CD8-positive, alpha-beta T cell (primary cell): ENCODE measurements at regions of chr1 and their contacts with region 1.

Region 1: GRCh38 chr1:167599957-167600581 is 30.0 kb upstream of the RCSD1 start:
- DNase-seq: peak in 6 of 9 experiments; percentile 32 to 81 (median 58)
- ATAC-seq: peak; percentile 88
- H3K4me3 ChIP-seq: no peak overlapping the region
- H3K4me3 Mint-ChIP-seq: peak overlapping the region; percentile 38
- H3K27ac ChIP-seq: no peak overlapping the region
- H3K27ac Mint-ChIP-seq: no peak overlapping the region
- H3K4me1 ChIP-seq: peaks cover 38% of the 10 kb centered on the region
- H3K4me1 Mint-ChIP-seq: peaks cover 42% of the 10 kb centered on the region
- H3K27me3 ChIP-seq: no peaks in the 10 kb centered on the region
- H3K27me3 Mint-ChIP-seq: no peaks in the 10 kb centered on the region
- CTCF ChIP-seq: peak; percentile 71

Region 2: GRCh38 chr1:167198518-167199133 is 401.4 kb before region 1 on chr1:
- CTCF ChIA-PET with region 1: no interaction called
- POLR2A ChIA-PET with region 1: no interaction called
- intact Hi-C with region 1: no loop called
- DNase-seq: no peak
- ATAC-seq: no peak
- H3K4me3 ChIP-seq: no peak overlapping the region
- H3K4me3 Mint-ChIP-seq: no peak overlapping the region
- H3K27ac ChIP-seq: no peak overlapping the region
- H3K27ac Mint-ChIP-seq: no peak overlapping the region
- H3K4me1 ChIP-seq: no peaks in the 10 kb centered on the region
- H3K4me1 Mint-ChIP-seq: no peaks in the 10 kb centered on the region
- H3K27me3 ChIP-seq: no peaks in the 10 kb centered on the region
- H3K27me3 Mint-ChIP-seq: no peaks in the 10 kb centered on the region
- CTCF ChIP-seq: no peak

Region 3: DNA sequence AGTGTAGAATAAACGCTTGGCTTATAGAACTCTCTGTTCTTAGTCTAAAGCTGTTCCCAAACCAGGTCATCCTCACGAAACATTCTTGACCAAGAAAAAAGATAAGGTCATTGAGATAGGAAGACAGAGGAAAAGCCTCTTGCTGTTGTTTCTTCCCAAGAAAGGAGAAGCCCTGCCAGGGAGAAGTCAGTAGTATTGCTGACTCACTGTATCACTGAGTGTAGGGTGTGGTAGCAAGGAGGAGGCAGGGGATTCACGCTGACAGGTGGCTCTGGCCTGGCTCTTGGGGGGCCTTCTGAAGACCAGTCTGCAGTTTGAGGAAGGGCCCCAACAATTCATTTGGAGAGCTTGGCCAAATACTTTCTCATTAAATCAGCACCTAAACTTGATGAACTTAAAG is 179.6 kb before region 1 on chr1:
- CTCF ChIA-PET with region 1: no interaction called
- POLR2A ChIA-PET with region 1: no interaction called
- intact Hi-C with region 1: no loop called
- DNase-seq: no peak
- ATAC-seq: no peak
- H3K4me3 ChIP-seq: no peak overlapping the region
- H3K4me3 Mint-ChIP-seq: no peak overlapping the region
- H3K27ac ChIP-seq: no peak overlapping the region
- H3K27ac Mint-ChIP-seq: no peak overlapping the region
- H3K4me1 ChIP-seq: no peaks in the 10 kb centered on the region
- H3K4me1 Mint-ChIP-seq: peaks cover 11% of the 10 kb centered on the region
- H3K27me3 ChIP-seq: no peaks in the 10 kb centered on the region
- H3K27me3 Mint-ChIP-seq: no peaks in the 10 kb centered on the region
- CTCF ChIP-seq: no peak

Region 4: DNA sequence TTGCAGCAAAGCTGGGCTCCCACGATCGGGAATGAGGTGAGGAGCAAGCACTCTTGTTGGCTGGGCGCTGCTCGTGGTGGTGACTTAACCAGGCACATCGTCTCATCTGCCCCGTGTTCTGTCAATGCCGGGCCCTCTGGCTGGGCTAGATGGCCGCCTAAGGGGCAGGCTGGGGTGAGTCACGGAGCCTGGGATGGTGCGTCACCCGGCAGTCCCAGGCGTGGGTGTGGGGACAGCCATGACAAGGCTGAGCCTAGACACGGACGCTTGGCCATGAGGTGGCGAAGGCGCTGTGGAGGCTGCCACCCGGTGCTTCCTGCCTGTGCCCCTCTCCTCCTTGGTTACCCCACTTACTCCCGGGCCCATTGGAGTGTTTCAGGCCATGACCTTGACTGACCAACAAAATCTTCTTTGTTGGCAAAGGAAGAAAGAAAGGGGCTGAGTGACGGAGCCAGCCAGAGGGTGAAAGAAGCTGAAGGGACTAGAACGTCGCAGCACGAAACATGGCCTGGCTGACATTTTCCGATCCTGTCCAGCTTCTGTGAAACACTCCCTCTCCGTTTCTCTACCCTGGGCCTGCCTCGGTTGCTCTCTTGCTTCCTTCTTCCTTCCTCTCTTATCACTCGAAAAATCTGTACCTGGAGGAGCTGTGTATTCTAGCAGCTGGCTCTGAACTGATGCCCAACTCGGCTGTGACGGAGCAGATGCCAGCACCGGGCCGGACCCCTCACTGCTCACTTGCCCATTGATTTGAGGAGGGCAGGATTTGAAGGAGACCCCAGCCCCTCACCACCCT is 82.3 kb before region 1 on chr1:
- CTCF ChIA-PET with region 1: no interaction called
- POLR2A ChIA-PET with region 1: no interaction called
- intact Hi-C with region 1: no loop called
- DNase-seq: peak; percentile 56 to 92 (median 86)
- ATAC-seq: peak; percentile 75
- H3K4me3 ChIP-seq: peak overlapping the region; percentile 94 to 98
- H3K4me3 Mint-ChIP-seq: peak overlapping the region; percentile 99
- H3K27ac ChIP-seq: peak overlapping the region; percentile 94 to 95
- H3K27ac Mint-ChIP-seq: peak overlapping the region; percentile 100
- H3K4me1 ChIP-seq: peaks cover 40% of the 10 kb centered on the region
- H3K4me1 Mint-ChIP-seq: peaks cover 51% of the 10 kb centered on the region
- H3K27me3 ChIP-seq: no peaks in the 10 kb centered on the region
- H3K27me3 Mint-ChIP-seq: no peaks in the 10 kb centered on the region
- CTCF ChIP-seq: no peak

Region 5: GRCh38 chr1:167553136-167554027 is 46.7 kb before region 1 on chr1 and contains the start of gene CREG1:
- CTCF ChIA-PET with region 1: interaction called, 8 read pairs
- POLR2A ChIA-PET with region 1: no interaction called
- intact Hi-C with region 1: loop called in 1 of 2 experiments (anchors 5 kb)
- DNase-seq: peak; percentile 70 to 93 (median 88)
- ATAC-seq: peak; percentile 97
- H3K4me3 ChIP-seq: peak within 1 kb of the TSS; percentile 62 to 70
- H3K4me3 Mint-ChIP-seq: peak within 1 kb of the TSS; percentile 88
- H3K27ac ChIP-seq: peak within 1 kb of the TSS in 1 of 2 experiments; percentile 57
- H3K27ac Mint-ChIP-seq: no peak within 1 kb of the TSS
- H3K4me1 ChIP-seq: peaks cover 18% of the 10 kb centered on the region
- H3K4me1 Mint-ChIP-seq: peaks cover 47% of the 10 kb centered on the region
- H3K27me3 ChIP-seq: no peaks in the 10 kb centered on the region
- H3K27me3 Mint-ChIP-seq: no peaks in the 10 kb centered on the region
- CTCF ChIP-seq: no peak
- total RNA-seq, gene CREG1: 9.3 to 9.8 TPM

Region 6: GRCh38 chr1:167627865-167628641 is 28.0 kb after region 1 on chr1:
- CTCF ChIA-PET with region 1: interaction called, 59 read pairs
- POLR2A ChIA-PET with region 1: interaction called, 28 read pairs
- intact Hi-C with region 1: no loop called
- DNase-seq: peak; percentile 44 to 91 (median 73)
- ATAC-seq: peak; percentile 67
- H3K4me3 ChIP-seq: peak overlapping the region; percentile 28 to 96
- H3K4me3 Mint-ChIP-seq: peak overlapping the region; percentile 89
- H3K27ac ChIP-seq: peak overlapping the region; percentile 46 to 94
- H3K27ac Mint-ChIP-seq: peak overlapping the region; percentile 96
- H3K4me1 ChIP-seq: peaks cover 50% of the 10 kb centered on the region
- H3K4me1 Mint-ChIP-seq: peaks cover 63% of the 10 kb centered on the region
- H3K27me3 ChIP-seq: no peaks in the 10 kb centered on the region
- H3K27me3 Mint-ChIP-seq: no peaks in the 10 kb centered on the region
- CTCF ChIP-seq: no peak

Region 7: DNA sequence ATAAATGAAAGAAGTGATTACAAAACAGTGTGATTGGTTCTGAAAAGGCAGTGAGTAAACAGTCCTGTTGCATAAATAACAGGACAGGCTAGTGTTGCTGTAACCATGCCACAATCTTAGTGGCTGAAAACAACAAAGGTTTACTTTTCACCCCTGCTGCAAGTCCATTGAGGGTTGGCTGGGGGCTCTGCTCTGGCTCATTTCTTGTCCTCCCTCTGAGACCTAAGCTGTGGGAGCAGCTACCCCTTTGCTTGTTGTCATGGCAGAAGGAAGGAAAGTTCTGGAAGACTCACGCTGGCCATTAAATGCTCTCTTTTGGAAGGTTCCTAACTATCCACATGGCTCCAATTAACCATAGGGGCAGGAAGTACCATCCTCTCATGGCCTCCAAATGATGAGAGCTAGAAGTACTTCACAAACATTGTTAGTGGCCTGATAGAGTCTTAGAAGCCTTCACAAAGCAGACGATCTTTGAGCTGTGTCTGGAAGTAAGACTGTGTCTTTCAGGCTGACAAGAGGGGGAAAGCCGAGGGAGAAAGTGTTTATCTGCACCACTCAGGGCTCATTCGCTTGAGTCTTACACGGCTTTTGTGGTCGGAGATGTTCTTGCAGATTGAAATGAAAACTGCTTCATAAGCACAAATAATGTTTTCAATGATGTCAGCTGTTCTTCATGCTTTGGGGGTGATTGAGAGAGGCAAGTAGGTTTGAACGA is 41.9 kb after region 1 on chr1:
- CTCF ChIA-PET with region 1: interaction called, 154 read pairs
- POLR2A ChIA-PET with region 1: interaction called, 68 read pairs
- intact Hi-C with region 1: loop called (anchors 1 kb)
- DNase-seq: peak in 3 of 9 experiments; percentile 42 to 59 (median 51)
- ATAC-seq: peak; percentile 50
- H3K4me3 ChIP-seq: no peak overlapping the region
- H3K4me3 Mint-ChIP-seq: peak overlapping the region; percentile 62
- H3K27ac ChIP-seq: peak overlapping the region in 1 of 2 experiments; percentile 46
- H3K27ac Mint-ChIP-seq: peak overlapping the region; percentile 84
- H3K4me1 ChIP-seq: peaks cover 83% of the 10 kb centered on the region
- H3K4me1 Mint-ChIP-seq: peaks cover 96% of the 10 kb centered on the region
- H3K27me3 ChIP-seq: no peaks in the 10 kb centered on the region
- H3K27me3 Mint-ChIP-seq: no peaks in the 10 kb centered on the region
- CTCF ChIP-seq: no peak

Region 8: DNA sequence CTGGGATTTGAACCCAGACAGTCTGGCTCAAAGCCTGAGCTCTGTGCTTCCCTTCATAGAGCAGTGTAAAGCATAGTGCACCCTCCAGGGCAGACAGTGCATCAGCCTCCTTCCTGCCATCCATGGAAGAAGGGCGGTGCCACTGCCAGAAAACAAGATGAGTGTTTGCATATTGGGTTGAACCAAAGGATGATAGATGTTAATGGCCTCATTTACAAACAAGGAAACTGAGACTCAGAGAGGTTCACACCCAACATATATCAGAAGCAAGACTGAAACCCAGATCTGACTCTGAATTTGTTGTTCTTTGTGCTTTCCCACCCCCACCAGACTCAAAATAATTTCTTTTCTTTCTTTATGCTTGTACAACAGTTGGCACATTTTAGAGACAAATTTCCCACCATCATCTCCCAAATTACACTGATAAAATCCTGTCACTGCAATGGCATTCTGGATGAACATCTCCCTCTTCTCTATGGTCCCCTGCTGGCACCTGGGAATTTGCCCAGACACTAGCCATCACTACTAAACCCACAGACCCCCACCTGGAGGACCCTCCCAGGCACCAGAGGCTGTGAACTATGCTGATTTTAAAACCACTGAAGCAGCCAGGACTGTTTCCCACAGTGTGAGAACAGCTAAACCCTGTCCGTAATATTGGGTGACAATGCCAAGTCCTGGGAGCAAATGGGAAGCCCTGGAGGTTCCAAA is 76.3 kb after region 1 on chr1:
- CTCF ChIA-PET with region 1: interaction called, 13 read pairs
- POLR2A ChIA-PET with region 1: interaction called, 3 read pairs
- intact Hi-C with region 1: no loop called
- DNase-seq: no peak
- ATAC-seq: no peak
- H3K4me3 ChIP-seq: no peak overlapping the region
- H3K4me3 Mint-ChIP-seq: no peak overlapping the region
- H3K27ac ChIP-seq: peak overlapping the region in 1 of 2 experiments; percentile 41
- H3K27ac Mint-ChIP-seq: no peak overlapping the region
- H3K4me1 ChIP-seq: peaks cover 46% of the 10 kb centered on the region
- H3K4me1 Mint-ChIP-seq: peaks cover 55% of the 10 kb centered on the region
- H3K27me3 ChIP-seq: no peaks in the 10 kb centered on the region
- H3K27me3 Mint-ChIP-seq: no peaks in the 10 kb centered on the region
- CTCF ChIP-seq: no peak

Region 9: GRCh38 chr1:167697667-167698141 is 97.6 kb after region 1 on chr1:
- CTCF ChIA-PET with region 1: interaction called, 19 read pairs
- POLR2A ChIA-PET with region 1: no interaction called
- intact Hi-C with region 1: no loop called
- DNase-seq: no peak
- ATAC-seq: no peak
- H3K4me3 ChIP-seq: no peak overlapping the region
- H3K4me3 Mint-ChIP-seq: no peak overlapping the region
- H3K27ac ChIP-seq: no peak overlapping the region
- H3K27ac Mint-ChIP-seq: peak overlapping the region; percentile 52
- H3K4me1 ChIP-seq: no peaks in the 10 kb centered on the region
- H3K4me1 Mint-ChIP-seq: peaks cover 5% of the 10 kb centered on the region
- H3K27me3 ChIP-seq: no peaks in the 10 kb centered on the region
- H3K27me3 Mint-ChIP-seq: no peaks in the 10 kb centered on the region
- CTCF ChIP-seq: no peak